ENCODE measurements at regions of chr5 and their contacts with region 1.

Region 1: GRCh38 chr5:160081495-160081894 is 37.8 kb downstream of the PWWP2A start:
- DNase-seq: no peak
- ATAC-seq: no peak
- H3K4me3 ChIP-seq: no peak overlapping the region
- H3K27ac ChIP-seq: no peak overlapping the region
- H3K4me1 ChIP-seq: peaks cover 0 to 12% of the 10 kb centered on the region in 2 experiments; a peak in 2 of 4 replicates
- H3K27me3 ChIP-seq: no peaks in the 10 kb centered on the region
- CTCF ChIP-seq: no peak
- POLR2A ChIP-seq: no peak
- RAD21 ChIP-seq: no peak

Region 2: GRCh38 chr5:159874263-159874662 is 207.2 kb before region 1 on chr5:
- CTCF ChIA-PET with region 1: no interaction called
- POLR2A ChIA-PET with region 1: no interaction called
- RAD21 ChIA-PET with region 1: no interaction called
- intact Hi-C with region 1: no loop called
- DNase-seq: no peak
- ATAC-seq: peak; percentile 30; the same call in 1 of the 2 replicates
- H3K4me3 ChIP-seq: no peak overlapping the region
- H3K27ac ChIP-seq: no peak overlapping the region
- H3K4me1 ChIP-seq: peaks cover 5 to 25% of the 10 kb centered on the region in 2 experiments
- H3K27me3 ChIP-seq: no peaks in the 10 kb centered on the region
- CTCF ChIP-seq: no peak
- POLR2A ChIP-seq: no peak
- RAD21 ChIP-seq: no peak

Region 3: GRCh38 chr5:160001457-160001856 is 80.0 kb before region 1 on chr5:
- CTCF ChIA-PET with region 1: no interaction called
- POLR2A ChIA-PET with region 1: no interaction called
- RAD21 ChIA-PET with region 1: no interaction called
- intact Hi-C with region 1: no loop called
- DNase-seq: no peak
- ATAC-seq: no peak
- H3K4me3 ChIP-seq: no peak overlapping the region
- H3K27ac ChIP-seq: no peak overlapping the region
- H3K4me1 ChIP-seq: peaks cover 0 to 5% of the 10 kb centered on the region in 2 experiments; a peak in 1 of 4 replicates
- H3K27me3 ChIP-seq: no peaks in the 10 kb centered on the region
- CTCF ChIP-seq: no peak
- POLR2A ChIP-seq: no peak
- RAD21 ChIP-seq: no peak

Region 4: GRCh38 chr5:160221082-160221481 is 139.6 kb after region 1 on chr5:
- CTCF ChIA-PET with region 1: no interaction called
- POLR2A ChIA-PET with region 1: no interaction called
- RAD21 ChIA-PET with region 1: no interaction called
- intact Hi-C with region 1: no loop called
- DNase-seq: no peak
- ATAC-seq: no peak
- H3K4me3 ChIP-seq: no peak overlapping the region
- H3K27ac ChIP-seq: no peak overlapping the region
- H3K4me1 ChIP-seq: no peaks in the 10 kb centered on the region
- H3K27me3 ChIP-seq: no peaks in the 10 kb centered on the region
- CTCF ChIP-seq: no peak
- POLR2A ChIP-seq: no peak
- RAD21 ChIP-seq: no peak

Region 5: GRCh38 chr5:160342403-160342941 is 261.0 kb after region 1 on chr5:
- CTCF ChIA-PET with region 1: interaction called, 34 read pairs
- POLR2A ChIA-PET with region 1: interaction called, 5 read pairs
- RAD21 ChIA-PET with region 1: interaction called in 1 of 2 experiments, 3 read pairs
- intact Hi-C with region 1: loop called (anchors 1 kb)
- DNase-seq: no peak
- ATAC-seq: no peak
- H3K4me3 ChIP-seq: no peak overlapping the region
- H3K27ac ChIP-seq: no peak overlapping the region
- H3K4me1 ChIP-seq: peaks cover 0 to 7% of the 10 kb centered on the region in 2 experiments; a peak in 2 of 4 replicates
- H3K27me3 ChIP-seq: no peaks in the 10 kb centered on the region
- CTCF ChIP-seq: no peak
- POLR2A ChIP-seq: no peak
- RAD21 ChIP-seq: no peak

Region 6: GRCh38 chr5:160390787-160391696 is 309.5 kb after region 1 on chr5:
- CTCF ChIA-PET with region 1: interaction called, 10 read pairs
- POLR2A ChIA-PET with region 1: no interaction called
- RAD21 ChIA-PET with region 1: no interaction called
- intact Hi-C with region 1: loop called (anchors 2 kb)
- DNase-seq: no peak
- ATAC-seq: peak; percentile 52; the same call in 1 of the 2 replicates
- H3K4me3 ChIP-seq: no peak overlapping the region
- H3K27ac ChIP-seq: no peak overlapping the region
- H3K4me1 ChIP-seq: no peaks in the 10 kb centered on the region
- H3K27me3 ChIP-seq: no peaks in the 10 kb centered on the region
- CTCF ChIP-seq: peak; percentile 24 to 68 (median 53); a peak in 4 of 6 replicates
- POLR2A ChIP-seq: no peak
- RAD21 ChIP-seq: peak; percentile 76